ENCODE measurements at regions of chr17 and their contacts with region 1.

Region 1: DNA sequence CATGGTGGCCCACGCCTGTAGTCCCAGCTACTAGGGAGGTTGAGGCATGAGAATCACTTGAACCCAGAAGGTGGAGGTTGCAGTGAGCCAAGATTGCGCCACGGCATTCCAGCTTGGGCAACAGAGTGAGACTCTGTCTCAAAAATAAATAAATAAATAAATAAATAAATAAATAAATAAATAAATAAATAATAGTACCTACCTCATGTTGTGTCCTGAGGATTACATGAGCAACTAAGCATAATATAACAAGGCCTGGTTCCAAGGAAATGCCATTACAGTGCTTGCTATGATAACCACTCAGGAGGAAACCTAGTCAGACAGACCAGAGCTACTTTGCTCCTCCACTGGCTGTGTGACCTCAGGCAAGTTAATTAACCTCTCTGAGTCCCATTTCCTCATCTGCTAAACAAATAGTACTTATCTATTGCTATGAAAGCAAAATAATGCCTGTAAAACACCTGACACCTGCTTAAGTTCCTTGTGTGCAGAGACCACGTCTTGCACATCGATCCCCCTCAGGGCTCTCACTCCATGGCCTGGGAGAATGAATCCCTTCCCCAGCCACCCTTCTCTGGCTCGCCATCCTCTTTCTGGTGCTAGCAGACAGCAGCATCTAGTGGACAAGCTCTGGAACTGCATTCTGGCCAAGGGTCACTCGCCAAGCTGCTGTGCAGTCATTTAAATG is 7.5 kb downstream of the EPOP start:
- DNase-seq: peak; percentile 58 to 66
- H3K4me3 ChIP-seq: no peak overlapping the region
- H3K27ac ChIP-seq: no peak overlapping the region
- H3K4me1 ChIP-seq: peaks cover 7% of the 10 kb centered on the region
- H3K27me3 ChIP-seq: no peaks in the 10 kb centered on the region
- CTCF ChIP-seq: peak; percentile 99

Region 2: DNA sequence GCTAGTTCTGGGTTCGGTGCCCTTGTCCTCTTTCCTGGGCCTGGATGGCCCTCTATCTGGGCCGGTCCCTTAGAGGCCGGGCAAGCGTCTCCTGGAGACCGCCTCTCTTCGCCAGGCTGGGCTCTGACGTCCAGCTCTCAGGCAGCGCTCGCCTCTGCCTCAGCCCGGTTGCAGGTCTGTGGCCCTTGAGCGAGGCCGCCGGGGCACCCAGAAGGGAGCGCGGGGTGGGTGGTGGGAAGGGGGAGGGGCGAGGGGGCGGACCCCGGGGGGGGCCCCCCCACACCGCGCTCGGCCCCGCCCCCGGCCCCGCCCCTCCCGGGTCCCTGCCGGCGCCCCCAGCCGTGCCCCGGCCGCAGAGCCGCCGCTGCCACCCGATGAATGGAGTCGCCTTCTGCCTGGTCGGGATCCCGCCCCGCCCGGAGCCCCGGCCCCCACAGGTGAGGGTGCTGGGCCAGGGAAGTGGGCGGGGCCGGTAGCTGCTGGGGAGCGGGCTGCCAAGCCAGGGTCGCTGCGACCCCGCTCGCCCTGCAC is 239.1 kb before region 1 on chr17 and contains the start of gene ARHGAP23:
- CTCF ChIA-PET with region 1: interaction called, 6 read pairs
- POLR2A ChIA-PET with region 1: no interaction called
- intact Hi-C with region 1: loop called (anchors 1 kb)
- DNase-seq: peak; percentile 54 to 69
- H3K4me3 ChIP-seq: peak within 1 kb of the TSS; percentile 84
- H3K27ac ChIP-seq: 0 out of 2 replicates have a peak within 1 kb of the TSS, but pooled peaks have one; percentile 4
- H3K4me1 ChIP-seq: peaks cover 34% of the 10 kb centered on the region
- H3K27me3 ChIP-seq: no peaks in the 10 kb centered on the region
- CTCF ChIP-seq: no peak
- total RNA-seq, gene ARHGAP23: 129 and 137 TPM in 2 replicates

Region 3: DNA sequence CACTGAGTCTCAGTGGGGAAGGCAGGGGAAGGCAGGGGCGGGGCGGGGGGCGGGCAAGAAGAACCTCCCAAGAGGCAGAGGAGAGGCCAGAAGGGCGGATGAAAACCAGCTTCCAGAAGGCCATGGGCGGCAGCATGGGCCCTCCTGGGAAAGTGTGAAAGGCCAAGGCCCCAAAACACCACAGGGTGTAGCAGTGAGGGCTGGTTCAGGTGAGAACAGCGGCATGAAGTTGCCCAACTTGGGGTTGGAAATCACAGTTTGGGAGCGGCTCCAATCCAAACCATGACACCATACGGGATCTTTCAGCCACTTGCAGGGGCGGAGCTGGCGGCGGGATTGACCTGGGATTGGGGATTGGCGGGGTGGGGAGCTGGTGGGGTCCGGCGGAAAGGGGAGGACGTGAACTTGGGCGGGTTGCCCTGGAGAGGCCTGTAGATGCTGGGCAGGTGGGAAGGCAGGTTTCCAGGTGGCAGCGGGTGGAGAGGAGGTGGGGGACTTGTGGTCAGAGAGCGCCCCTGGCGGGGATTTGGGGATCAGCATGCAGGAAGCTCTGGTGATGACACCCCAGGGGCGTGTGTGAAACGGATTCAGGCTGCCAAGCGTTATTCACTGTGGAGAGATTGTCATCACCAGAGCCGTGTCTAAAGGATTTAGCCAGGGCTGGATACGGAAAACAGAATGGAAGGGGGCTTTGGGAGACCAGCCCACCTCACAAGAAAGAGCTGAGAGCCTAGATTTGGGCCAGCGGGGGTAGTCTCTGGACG is 158.1 kb before region 1 on chr17:
- CTCF ChIA-PET with region 1: no interaction called
- POLR2A ChIA-PET with region 1: interaction called, 8 read pairs
- intact Hi-C with region 1: loop called (anchors 5 kb)
- DNase-seq: peak in 1 of 2 experiments; percentile 55
- H3K4me3 ChIP-seq: no peak overlapping the region
- H3K27ac ChIP-seq: no peak overlapping the region
- H3K4me1 ChIP-seq: no peaks in the 10 kb centered on the region
- H3K27me3 ChIP-seq: no peaks in the 10 kb centered on the region
- CTCF ChIP-seq: peak; percentile 32; the same call in 1 of the 2 replicates

Region 4: DNA sequence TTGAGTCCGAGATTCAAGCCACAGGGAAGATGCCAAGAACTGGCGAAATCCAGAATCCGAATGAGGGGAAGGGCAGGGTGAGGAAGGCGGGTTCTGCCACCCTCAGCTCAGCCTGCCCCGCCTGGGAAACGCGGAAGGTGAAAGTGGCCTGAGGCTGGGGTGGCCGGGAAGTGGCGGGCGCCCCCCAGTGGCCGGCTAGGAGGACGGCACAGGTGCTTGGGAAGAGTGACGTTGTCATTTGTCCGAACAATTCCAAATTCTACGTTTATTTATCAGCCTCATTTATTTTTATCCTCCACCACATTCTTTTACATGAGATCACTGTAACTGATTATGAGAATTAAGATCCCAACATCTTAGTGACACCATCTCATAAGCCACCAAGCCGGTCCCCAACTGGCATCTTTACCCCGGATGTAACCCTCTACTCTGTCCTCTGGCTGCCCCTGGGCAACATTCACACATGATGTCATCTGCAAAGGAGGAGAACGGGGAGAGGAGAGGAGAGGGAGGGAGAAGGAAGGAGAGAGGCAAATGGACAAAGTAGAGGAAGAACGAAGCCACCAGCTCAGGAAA is 82.8 kb before region 1 on chr17:
- CTCF ChIA-PET with region 1: interaction called, 7 read pairs
- POLR2A ChIA-PET with region 1: no interaction called
- intact Hi-C with region 1: loop called (anchors 1 kb)
- DNase-seq: peak; percentile 81 to 91
- H3K4me3 ChIP-seq: peak overlapping the region; percentile 41; the same call in 1 of the 2 replicates
- H3K27ac ChIP-seq: peak overlapping the region; percentile 84
- H3K4me1 ChIP-seq: peaks cover 57% of the 10 kb centered on the region
- H3K27me3 ChIP-seq: no peaks in the 10 kb centered on the region
- CTCF ChIP-seq: peak; percentile 95

Measured in PC-9 (cell line).